Activated CD8-positive, alpha-beta T cell treated with anti-CD3 and anti-CD28 coated beads, Interleukin-2, amount 10 ng/mL, durations not matched to agents 7 days and 5 days (primary cell): ENCODE measurements at regions of chr15 and their contacts with region 1.

Region 1: GRCh38 chr15:91302588-91303439 is 202.8 kb downstream of the SV2B start:
- DNase-seq: peak; percentile 45
- ATAC-seq: peak; percentile 74
- H3K4me3 Mint-ChIP-seq: no peak overlapping the region
- H3K27ac Mint-ChIP-seq: peak overlapping the region; percentile 64
- H3K4me1 Mint-ChIP-seq: peaks cover 53% of the 10 kb centered on the region
- H3K27me3 Mint-ChIP-seq: peaks cover 41% of the 10 kb centered on the region

Region 2: GRCh38 chr15:91320101-91320500 is 17.3 kb after region 1 on chr15:
- CTCF ChIA-PET with region 1: interaction called, 15 read pairs
- POLR2A ChIA-PET with region 1: no interaction called
- DNase-seq: no peak
- ATAC-seq: peak; percentile 85
- H3K4me3 Mint-ChIP-seq: peak overlapping the region; percentile 48
- H3K27ac Mint-ChIP-seq: peak overlapping the region; percentile 86
- H3K4me1 Mint-ChIP-seq: peaks cover 56% of the 10 kb centered on the region
- H3K27me3 Mint-ChIP-seq: peaks cover 13% of the 10 kb centered on the region

Region 3: DNA sequence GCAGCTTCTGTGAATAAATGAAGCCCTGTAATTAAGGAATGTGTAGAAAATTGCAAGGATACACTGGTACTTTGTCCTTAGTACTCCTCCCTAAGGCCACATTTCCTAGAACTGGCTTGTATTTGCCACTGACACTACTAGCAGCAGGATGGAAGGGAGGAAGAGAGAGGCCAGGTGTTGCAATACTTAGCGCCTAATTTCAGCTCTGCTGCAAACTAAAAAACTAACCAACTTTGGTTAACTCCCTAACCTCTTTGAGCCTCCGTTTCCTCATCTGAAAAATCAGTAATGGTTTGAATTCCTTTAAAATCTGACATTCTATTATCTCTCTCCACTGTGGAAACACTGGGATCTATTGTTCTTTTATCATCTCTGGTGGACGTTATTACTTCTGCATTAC is 54.2 kb after region 1 on chr15:
- CTCF ChIA-PET with region 1: no interaction called
- POLR2A ChIA-PET with region 1: no interaction called
- DNase-seq: no peak
- ATAC-seq: no peak
- H3K4me3 Mint-ChIP-seq: no peak overlapping the region
- H3K27ac Mint-ChIP-seq: no peak overlapping the region
- H3K4me1 Mint-ChIP-seq: peaks cover 9% of the 10 kb centered on the region
- H3K27me3 Mint-ChIP-seq: peaks cover 31% of the 10 kb centered on the region

Region 4: GRCh38 chr15:92077353-92078085 is 774.7 kb after region 1 on chr15:
- CTCF ChIA-PET with region 1: interaction called, 27 read pairs
- POLR2A ChIA-PET with region 1: no interaction called
- DNase-seq: peak; percentile 75
- ATAC-seq: peak; percentile 75
- H3K4me3 Mint-ChIP-seq: no peak overlapping the region
- H3K27ac Mint-ChIP-seq: no peak overlapping the region
- H3K4me1 Mint-ChIP-seq: peaks cover 33% of the 10 kb centered on the region
- H3K27me3 Mint-ChIP-seq: no peaks in the 10 kb centered on the region